ENCODE measurements at regions of chr7 and their contacts with region 1.

Region 1: DNA sequence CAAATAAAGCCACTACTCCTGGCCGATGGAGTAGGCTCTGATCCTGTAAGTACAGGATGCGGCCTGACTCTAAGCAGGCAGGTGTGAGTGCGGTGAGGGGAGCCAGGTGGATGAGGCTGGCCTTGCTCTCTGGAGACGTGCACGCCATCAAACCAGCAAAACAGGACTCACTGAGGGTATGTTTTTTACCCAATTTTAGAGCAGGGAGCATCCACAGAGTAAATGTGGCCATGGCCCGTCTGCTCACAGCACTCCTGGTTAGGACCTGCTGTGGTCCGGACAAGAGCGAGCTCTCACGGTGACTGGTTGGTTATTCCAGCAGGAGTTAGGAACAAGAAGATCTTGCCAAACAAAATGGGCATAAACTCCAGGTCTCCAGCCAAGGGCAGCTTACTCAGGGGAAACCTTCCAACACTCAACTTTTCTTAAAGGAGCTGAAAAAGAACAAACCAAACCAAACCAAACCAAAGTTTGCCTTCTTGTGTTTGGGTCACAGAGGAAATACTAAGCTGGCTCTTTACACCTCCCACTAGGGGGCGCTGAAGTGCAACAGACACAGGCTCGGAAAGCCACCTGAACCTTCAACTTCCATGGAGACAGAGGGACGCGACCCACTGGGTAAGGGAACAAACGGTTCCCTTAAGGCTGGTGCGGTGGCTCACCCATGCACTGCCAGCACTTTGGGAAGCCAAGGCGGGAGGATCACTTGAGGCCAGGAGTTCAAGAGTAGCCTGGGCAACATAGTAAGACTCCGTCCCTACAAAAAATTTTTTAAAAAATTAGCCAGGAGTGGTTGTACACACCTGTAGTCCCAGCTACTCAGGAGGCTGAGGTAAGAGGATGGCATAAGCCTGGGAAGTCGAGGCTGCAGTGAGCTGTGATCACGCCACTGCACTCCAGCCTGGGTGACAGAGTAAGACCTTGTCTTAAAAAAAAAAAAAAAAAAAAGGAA is 122.4 kb downstream of the CLEC2L start:
- DNase-seq: peak; percentile 85 to 95 (median 88)
- H3K4me3 ChIP-seq: no peak overlapping the region
- H3K27ac ChIP-seq: peak overlapping the region; percentile 44 to 60
- H3K4me1 ChIP-seq: peaks cover 3 to 20% (median 19%) of the 10 kb centered on the region in 3 donors
- H3K27me3 ChIP-seq: no peaks in the 10 kb centered on the region
- CTCF ChIP-seq: peak; percentile 94

Region 2: GRCh38 chr7:139708541-139708940 is 62.7 kb after region 1 on chr7:
- intact Hi-C with region 1: no loop called
- DNase-seq: no peak
- H3K4me3 ChIP-seq: no peak overlapping the region
- H3K27ac ChIP-seq: no peak overlapping the region
- H3K4me1 ChIP-seq: peaks cover 0 to 31% (median 11%) of the 10 kb centered on the region in 3 donors
- H3K27me3 ChIP-seq: no peaks in the 10 kb centered on the region
- CTCF ChIP-seq: no peak

Region 3: GRCh38 chr7:139767561-139767982 is 121.7 kb after region 1 on chr7:
- intact Hi-C with region 1: loop called (anchors 10 kb)
- DNase-seq: no peak
- H3K4me3 ChIP-seq: no peak overlapping the region
- H3K27ac ChIP-seq: peak overlapping the region in 1 of 2 donors; percentile 18
- H3K4me1 ChIP-seq: peaks cover 5 to 55% (median 40%) of the 10 kb centered on the region in 3 donors
- H3K27me3 ChIP-seq: no peaks in the 10 kb centered on the region
- CTCF ChIP-seq: no peak

Region 4: GRCh38 chr7:139829025-139829774 is 183.4 kb after region 1 on chr7 and contains the start of gene TBXAS1:
- intact Hi-C with region 1: no loop called
- DNase-seq: peak in 4 of 5 donors; percentile 80 to 93 (median 88)
- H3K4me3 ChIP-seq: peak within 1 kb of the TSS in 2 of 3 donors; percentile 20 to 48
- H3K27ac ChIP-seq: peak within 1 kb of the TSS; percentile 63 to 91
- H3K4me1 ChIP-seq: peaks cover 12 to 28% (median 16%) of the 10 kb centered on the region in 3 donors
- H3K27me3 ChIP-seq: no peaks in the 10 kb centered on the region
- CTCF ChIP-seq: no peak
- total RNA-seq, gene TBXAS1: 33.6 TPM

Measured in kidney (tissue), 22 donors.